Transverse colon (tissue), 4 donors: ENCODE measurements at regions of chr12 and their contacts with region 1.

Region 1: GRCh38 chr12:57621497-57622292 is 10.5 kb downstream of the ARHGEF25 start:
- DNase-seq: peak; percentile 55
- H3K4me3 ChIP-seq: peak overlapping the region in 2 of 4 donors; percentile 30 to 40
- H3K27ac ChIP-seq: no peak overlapping the region
- H3K4me1 ChIP-seq: peaks cover 0 to 23% (median 14%) of the 10 kb centered on the region in 4 donors
- H3K27me3 ChIP-seq: peaks cover 98% of the 10 kb centered on the region
- CTCF ChIP-seq: peak; percentile 89 to 98 (median 92)
- EP300 ChIP-seq: no peak
- POLR2A ChIP-seq: no peak

Region 2: DNA sequence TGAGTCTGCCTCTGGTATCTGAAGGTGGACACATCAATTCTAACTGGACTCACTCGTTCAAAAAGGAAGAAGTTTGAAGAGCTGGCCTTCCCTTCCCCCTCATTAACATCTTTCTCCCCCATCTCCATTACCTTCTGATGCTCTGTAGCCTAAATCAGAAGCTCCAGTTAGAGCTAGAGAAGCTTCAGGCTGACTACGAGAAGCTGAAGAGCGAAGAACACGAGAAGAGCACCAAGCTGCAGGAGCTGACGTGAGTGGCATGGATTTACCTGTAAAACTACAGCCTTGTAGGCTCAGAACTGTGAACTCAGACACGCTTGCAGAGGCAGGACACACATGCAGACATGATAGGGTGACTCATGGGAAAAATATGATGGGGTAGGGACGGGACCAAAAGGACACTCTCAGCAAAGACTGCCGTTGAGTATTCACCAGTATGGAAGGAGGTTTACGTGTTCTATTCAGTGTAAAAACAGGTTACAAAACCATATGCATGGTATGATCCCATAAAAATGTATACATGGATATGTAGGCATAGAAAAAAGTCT is 45.0 kb before region 1 on chr12:
- in situ Hi-C with region 1: loop called in 3 of 4 experiments (anchors 5 to 10 kb)
- intact Hi-C with region 1: loop called (anchors 2 kb)
- DNase-seq: no peak
- H3K4me3 ChIP-seq: no peak overlapping the region
- H3K27ac ChIP-seq: no peak overlapping the region
- H3K4me1 ChIP-seq: no peaks in the 10 kb centered on the region
- H3K27me3 ChIP-seq: no peaks in the 10 kb centered on the region
- CTCF ChIP-seq: no peak
- EP300 ChIP-seq: no peak
- POLR2A ChIP-seq: no peak

Region 3: DNA sequence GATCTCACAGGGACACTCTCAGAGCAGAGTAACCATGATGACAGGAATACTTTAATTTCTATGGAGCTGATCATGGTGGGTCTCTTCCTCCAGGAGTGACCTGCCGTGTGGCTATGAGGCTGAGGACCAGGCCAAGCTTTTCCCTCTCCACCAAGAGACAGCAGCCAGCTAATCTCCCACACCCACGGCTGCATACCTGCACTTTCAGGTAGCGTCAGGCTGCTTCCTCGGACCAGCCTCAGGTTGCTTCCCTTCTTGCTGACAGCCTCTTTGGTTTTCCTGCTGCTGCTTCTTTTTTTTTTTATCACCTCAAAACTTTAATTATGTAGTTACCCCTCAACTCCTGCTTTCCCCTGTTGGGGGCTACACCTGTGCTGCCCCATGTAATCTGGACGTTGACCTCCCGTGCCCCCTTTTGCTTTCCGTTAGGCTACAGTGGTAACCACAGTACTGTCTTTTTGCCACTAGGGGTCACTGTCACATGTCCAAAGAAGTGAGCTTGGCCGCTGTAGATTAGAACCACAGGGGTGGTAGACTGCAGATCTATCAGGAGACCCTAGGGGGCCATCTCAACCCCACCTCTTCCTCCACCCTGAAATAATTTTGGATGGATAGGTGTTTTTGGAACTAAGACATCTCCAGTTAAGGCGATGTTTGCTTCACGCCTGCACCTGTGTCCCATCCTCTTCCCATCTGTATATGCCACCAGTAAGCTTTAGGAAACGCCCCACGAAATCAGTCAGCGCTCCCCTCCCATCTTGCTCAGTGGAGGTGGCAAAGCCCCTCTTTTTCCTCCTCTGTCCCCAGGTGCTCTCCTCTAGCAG is 38.5 kb before region 1 on chr12:
- in situ Hi-C with region 1: loop called in 3 of 4 experiments (anchors 5 to 10 kb)
- intact Hi-C with region 1: loop called (anchors 1 kb)
- DNase-seq: peak; percentile 63
- H3K4me3 ChIP-seq: no peak overlapping the region
- H3K27ac ChIP-seq: no peak overlapping the region
- H3K4me1 ChIP-seq: no peaks in the 10 kb centered on the region
- H3K27me3 ChIP-seq: peaks cover 29% of the 10 kb centered on the region
- CTCF ChIP-seq: peak; percentile 91 to 96 (median 93)
- EP300 ChIP-seq: no peak
- POLR2A ChIP-seq: no peak